ENCODE measurements at regions of chr9 and their contacts with region 1.

Region 1: DNA sequence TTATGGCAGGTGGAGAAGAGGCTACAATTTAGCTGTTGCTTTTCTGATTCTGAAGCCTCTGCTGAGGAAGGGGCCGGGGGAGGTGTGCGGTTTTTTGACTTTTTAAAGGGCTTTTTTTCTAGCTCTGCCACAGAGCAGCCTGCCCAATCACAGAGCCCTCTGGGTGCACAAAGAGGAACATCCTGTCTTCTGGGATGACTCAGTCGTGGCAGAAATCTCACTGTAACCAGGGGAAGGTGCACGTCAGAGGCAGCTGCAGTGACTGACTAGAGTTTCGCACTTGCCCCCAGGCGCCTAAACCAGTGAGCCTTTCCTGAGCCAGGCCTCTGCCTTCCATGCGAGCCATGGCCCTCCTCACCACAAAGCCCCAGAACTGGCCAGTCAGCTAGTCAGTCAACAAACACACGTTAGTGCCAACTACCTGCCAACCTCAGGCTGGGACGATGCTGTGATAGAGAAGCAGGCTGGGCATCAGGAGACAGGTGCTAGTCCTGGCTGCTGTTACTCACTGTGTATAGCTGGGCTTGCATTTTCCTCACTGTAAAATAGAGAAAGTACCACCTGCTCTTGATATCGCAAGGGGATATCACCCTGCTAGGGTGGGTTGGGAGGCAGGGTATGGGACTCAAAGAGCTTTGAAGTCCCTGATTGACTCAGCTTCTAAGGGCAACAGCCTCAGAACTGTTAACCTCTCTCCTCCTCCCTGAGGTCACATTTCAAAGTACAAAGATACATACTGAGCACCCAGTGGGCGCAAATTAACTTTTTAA is 2.2 kb downstream of the AKNA start:
- DNase-seq: peak; percentile 65 to 96 (median 90)
- ATAC-seq: peak; percentile 74 to 83
- H3K4me3 Mint-ChIP-seq: peak overlapping the region; percentile 89 to 100 (median 97)
- H3K27ac Mint-ChIP-seq: peak overlapping the region; percentile 95 to 100 (median 98)
- H3K4me1 Mint-ChIP-seq: peaks cover 41 to 91% (median 71%) of the 10 kb centered on the region in 4 donors
- H3K27me3 Mint-ChIP-seq: no peaks in the 10 kb centered on the region

Region 2: GRCh38 chr9:114372921-114373448 is 12.6 kb before region 1 on chr9:
- POLR2A ChIA-PET with region 1: interaction called, 1,589 read pairs
- DNase-seq: peak; percentile 62 to 96 (median 86)
- ATAC-seq: peak; percentile 84 to 93
- H3K4me3 Mint-ChIP-seq: peak overlapping the region; percentile 61 to 88 (median 83)
- H3K27ac Mint-ChIP-seq: peak overlapping the region; percentile 85 to 98 (median 90)
- H3K4me1 Mint-ChIP-seq: peaks cover 50 to 93% (median 92%) of the 10 kb centered on the region in 4 donors
- H3K27me3 Mint-ChIP-seq: no peaks in the 10 kb centered on the region

Region 3: DNA sequence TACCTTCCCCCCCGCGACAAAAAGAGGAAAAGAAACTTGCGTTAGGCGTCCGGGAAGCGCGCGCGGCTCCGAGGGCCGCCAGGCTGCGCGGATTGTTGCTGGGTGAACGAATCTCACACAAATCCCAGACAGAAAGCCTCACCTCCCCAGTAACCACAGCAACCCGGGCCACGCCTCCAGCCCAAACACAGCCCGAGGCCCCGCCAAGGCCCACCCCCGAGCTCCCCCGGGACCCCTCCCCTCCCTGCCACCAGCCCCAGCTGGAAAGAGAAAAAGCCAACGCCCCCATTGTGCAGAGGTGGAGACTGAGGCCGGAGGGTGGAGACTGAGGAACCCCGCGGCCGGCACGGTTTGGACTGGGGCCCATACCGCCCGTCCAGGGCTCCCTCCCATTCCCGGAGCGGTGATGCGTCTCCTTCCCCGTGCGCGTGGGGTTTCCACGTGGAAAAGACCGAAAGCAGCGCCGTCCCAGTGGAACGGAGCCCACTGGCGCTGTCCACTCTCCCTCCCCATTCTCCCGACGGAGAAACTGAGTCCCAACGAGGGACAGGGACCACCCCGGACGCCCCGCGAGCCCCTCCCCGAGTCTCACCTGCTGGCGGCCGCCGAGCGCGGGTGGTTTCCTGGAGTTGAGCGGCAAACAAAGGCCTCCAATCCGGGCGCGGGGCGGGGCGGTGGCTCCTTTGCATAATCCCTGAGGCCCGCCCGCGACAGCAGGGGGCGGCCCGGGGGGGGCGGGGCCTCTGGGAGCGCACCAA is 12.4 kb after region 1 on chr9:
- POLR2A ChIA-PET with region 1: interaction called, 214 read pairs
- DNase-seq: peak; percentile 93 to 97 (median 95)
- ATAC-seq: peak; percentile 81 to 86
- H3K4me3 Mint-ChIP-seq: peak overlapping the region; percentile 93 to 99 (median 98)
- H3K27ac Mint-ChIP-seq: peak overlapping the region; percentile 96 to 100 (median 99)
- H3K4me1 Mint-ChIP-seq: peaks cover 24 to 54% (median 48%) of the 10 kb centered on the region in 4 donors
- H3K27me3 Mint-ChIP-seq: no peaks in the 10 kb centered on the region

Region 4: DNA sequence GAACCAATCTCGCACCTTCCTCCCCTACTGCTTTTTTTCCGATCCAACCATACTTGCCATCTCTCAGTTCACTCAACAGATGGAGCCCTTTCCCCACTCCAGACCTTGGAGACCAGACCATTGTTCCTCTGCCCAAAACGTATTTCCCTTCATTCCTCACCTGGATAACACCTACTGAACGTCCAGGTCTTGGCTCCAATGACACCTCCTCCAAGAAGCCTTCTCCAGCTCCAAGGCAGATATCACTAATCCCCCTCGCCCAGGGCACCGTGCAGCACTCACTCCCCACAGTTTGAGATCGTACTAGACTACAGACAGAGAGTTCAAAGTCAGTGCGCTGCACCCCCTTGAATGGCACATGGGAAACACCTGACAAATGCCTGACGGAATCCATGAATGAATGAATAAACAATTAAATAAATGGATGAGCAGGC is 49.3 kb after region 1 on chr9:
- POLR2A ChIA-PET with region 1: no interaction called
- DNase-seq: peak in 1 of 10 donors; percentile 9
- ATAC-seq: no peak
- H3K4me3 Mint-ChIP-seq: no peak overlapping the region
- H3K27ac Mint-ChIP-seq: no peak overlapping the region
- H3K4me1 Mint-ChIP-seq: peaks cover 2 to 6% (median 4%) of the 10 kb centered on the region in 4 donors
- H3K27me3 Mint-ChIP-seq: peaks cover 0 to 2% (median 0%) of the 10 kb centered on the region in 5 donors

Region 5: GRCh38 chr9:114611516-114612271 is 226.1 kb after region 1 on chr9:
- POLR2A ChIA-PET with region 1: interaction called, 12 read pairs
- DNase-seq: peak in 5 of 10 donors; percentile 36 to 65 (median 39)
- ATAC-seq: peak; percentile 69
- H3K4me3 Mint-ChIP-seq: peak overlapping the region; percentile 76 to 96 (median 90)
- H3K27ac Mint-ChIP-seq: peak overlapping the region; percentile 90 to 97 (median 94)
- H3K4me1 Mint-ChIP-seq: peaks cover 27 to 70% (median 55%) of the 10 kb centered on the region in 4 donors
- H3K27me3 Mint-ChIP-seq: no peaks in the 10 kb centered on the region

Measured in naive thymus-derived CD8-positive, alpha-beta T cell (primary cell).